Aorta (tissue), 5 donors: ENCODE measurements at regions of chr16 and their contacts with region 1.

Region 1: GRCh38 chr16:81006814-81007696 is at the starts of genes CENPN and CMC2:
- DNase-seq: peak; percentile 99
- ATAC-seq: peak; percentile 99
- H3K4me3 ChIP-seq: peak within 1 kb of the TSS; percentile 50 to 78
- H3K27ac ChIP-seq: peak within 1 kb of the TSS; percentile 68 to 81
- H3K4me1 ChIP-seq: peaks cover 0 to 3% of the 10 kb centered on the region in 2 donors
- H3K27me3 ChIP-seq: no peaks in the 10 kb centered on the region
- total RNA-seq, gene CENPN: 4.4 to 5.3 TPM
- total RNA-seq, gene CMC2: 33.0 to 33.2 TPM

Region 2: DNA sequence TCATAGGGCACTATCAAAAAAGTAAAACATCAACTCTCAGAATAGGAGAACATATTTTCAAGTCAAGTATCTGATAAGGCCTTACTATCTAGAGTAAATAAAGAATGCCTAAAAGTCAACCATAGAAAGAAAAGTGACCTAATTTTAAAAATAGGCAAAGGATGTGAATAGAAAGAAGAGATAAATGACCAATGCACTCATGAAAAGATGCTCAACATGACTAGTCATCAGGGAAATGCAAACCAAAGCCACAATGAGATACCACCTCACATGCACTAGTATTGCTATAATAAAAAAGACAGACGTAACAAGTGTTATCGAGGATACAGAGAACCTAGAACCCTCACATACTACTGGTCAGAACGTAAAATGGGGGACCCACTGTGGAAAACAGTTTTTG is 375.5 kb before region 1 on chr16:
- intact Hi-C with region 1: no loop called
- DNase-seq: no peak
- ATAC-seq: no peak
- H3K4me3 ChIP-seq: no peak overlapping the region
- H3K27ac ChIP-seq: no peak overlapping the region
- H3K4me1 ChIP-seq: no peaks in the 10 kb centered on the region
- H3K27me3 ChIP-seq: no peaks in the 10 kb centered on the region

Region 3: GRCh38 chr16:80931801-80932712 is 75.0 kb before region 1 on chr16:
- intact Hi-C with region 1: loop called (anchors 2 to 10 kb)
- DNase-seq: peak; percentile 80 to 85
- ATAC-seq: peak; percentile 90
- H3K4me3 ChIP-seq: peak overlapping the region; percentile 1 to 21
- H3K27ac ChIP-seq: peak overlapping the region; percentile 58 to 75
- H3K4me1 ChIP-seq: no peaks in the 10 kb centered on the region
- H3K27me3 ChIP-seq: no peaks in the 10 kb centered on the region

Region 4: GRCh38 chr16:81077076-81077940 is 70.3 kb after region 1 on chr16 and contains the start of gene C16orf46:
- intact Hi-C with region 1: loop called in 1 of 2 experiments (anchors 1 kb)
- DNase-seq: peak; percentile 98 to 100
- ATAC-seq: peak; percentile 100
- H3K4me3 ChIP-seq: peak within 1 kb of the TSS; percentile 57 to 78
- H3K27ac ChIP-seq: peak within 1 kb of the TSS; percentile 64 to 97
- H3K4me1 ChIP-seq: no peaks in the 10 kb centered on the region
- H3K27me3 ChIP-seq: no peaks in the 10 kb centered on the region
- total RNA-seq, gene C16orf46: 0.24 to 0.49 TPM